CD4-positive, alpha-beta memory T cell (primary cell): ENCODE measurements at regions of chr17 and their contacts with region 1.

Region 1: GRCh38 chr17:29777663-29778062 is 152.4 kb downstream of the SSH2 start:
- DNase-seq: no peak
- H3K4me3 ChIP-seq: no peak overlapping the region
- H3K4me3 Mint-ChIP-seq: no peak overlapping the region
- H3K27ac ChIP-seq: no peak overlapping the region
- H3K27ac Mint-ChIP-seq: no peak overlapping the region
- H3K4me1 ChIP-seq: peaks cover 8% of the 10 kb centered on the region
- H3K4me1 Mint-ChIP-seq: peaks cover 5 to 9% (median 7%) of the 10 kb centered on the region in 4 donors
- H3K27me3 ChIP-seq: no peaks in the 10 kb centered on the region
- H3K27me3 Mint-ChIP-seq: no peaks in the 10 kb centered on the region

Region 2: GRCh38 chr17:29579866-29580771 is 197.5 kb before region 1 on chr17:
- CTCF ChIA-PET with region 1: interaction called, 28 read pairs
- POLR2A ChIA-PET with region 1: interaction called, 3 read pairs
- intact Hi-C with region 1: loop called (anchors 1 kb)
- DNase-seq: peak; percentile 85 to 91 (median 87)
- H3K4me3 ChIP-seq: no peak overlapping the region
- H3K4me3 Mint-ChIP-seq: peak overlapping the region in 2 of 8 donors; percentile 8 to 65
- H3K27ac ChIP-seq: no peak overlapping the region
- H3K27ac Mint-ChIP-seq: peak overlapping the region; percentile 55 to 90 (median 83)
- H3K4me1 ChIP-seq: peaks cover 18% of the 10 kb centered on the region
- H3K4me1 Mint-ChIP-seq: peaks cover 8 to 31% (median 18%) of the 10 kb centered on the region in 4 donors
- H3K27me3 ChIP-seq: no peaks in the 10 kb centered on the region
- H3K27me3 Mint-ChIP-seq: no peaks in the 10 kb centered on the region

Region 3: DNA sequence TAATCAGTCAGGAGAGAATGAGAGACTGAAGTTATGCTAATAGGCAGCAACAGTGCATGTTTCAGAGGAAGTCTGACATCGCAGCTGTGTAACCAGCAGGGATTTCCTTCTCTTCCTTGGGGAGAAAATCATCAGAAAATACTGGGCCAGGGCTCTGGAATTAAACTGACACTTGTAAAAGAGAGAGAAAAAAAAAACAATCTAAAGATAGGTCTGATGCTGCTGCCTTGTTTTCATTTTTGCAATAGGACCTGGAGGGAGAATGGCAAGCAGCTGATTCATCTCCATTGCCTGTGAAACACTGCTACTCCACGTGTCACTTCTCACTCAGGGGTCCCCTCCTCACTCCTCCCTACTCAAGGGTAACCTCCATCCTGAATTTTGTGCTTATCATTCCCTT is 137.2 kb before region 1 on chr17:
- CTCF ChIA-PET with region 1: interaction called, 141 read pairs
- POLR2A ChIA-PET with region 1: interaction called, 9 read pairs
- intact Hi-C with region 1: loop called (anchors 1 kb)
- DNase-seq: no peak
- H3K4me3 ChIP-seq: no peak overlapping the region
- H3K4me3 Mint-ChIP-seq: no peak overlapping the region
- H3K27ac ChIP-seq: no peak overlapping the region
- H3K27ac Mint-ChIP-seq: peak overlapping the region in 5 of 7 donors; percentile 60 to 96 (median 75)
- H3K4me1 ChIP-seq: no peaks in the 10 kb centered on the region
- H3K4me1 Mint-ChIP-seq: peaks cover 7 to 19% (median 13%) of the 10 kb centered on the region in 4 donors
- H3K27me3 ChIP-seq: no peaks in the 10 kb centered on the region
- H3K27me3 Mint-ChIP-seq: no peaks in the 10 kb centered on the region

Region 4: DNA sequence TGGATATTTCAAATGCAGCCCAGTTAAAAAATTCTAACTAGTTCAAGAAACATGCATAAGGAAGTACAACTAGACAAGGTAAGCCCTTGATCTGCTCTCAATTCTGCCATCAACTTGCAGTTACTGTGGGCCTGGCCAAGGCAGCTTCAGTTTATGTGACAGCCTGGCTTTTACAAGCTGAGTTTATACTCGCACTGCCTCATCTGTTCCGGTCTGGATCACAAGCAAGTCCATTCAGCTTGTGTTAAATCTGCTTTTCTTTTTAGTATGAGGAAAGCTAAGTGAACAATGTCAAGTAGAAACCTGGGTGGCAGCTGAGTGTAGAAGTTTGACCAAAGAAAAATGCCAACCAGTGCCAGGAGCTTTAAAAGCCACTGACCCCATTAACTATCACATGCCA is 78.4 kb before region 1 on chr17:
- CTCF ChIA-PET with region 1: interaction called, 28 read pairs
- POLR2A ChIA-PET with region 1: interaction called, 6 read pairs
- intact Hi-C with region 1: no loop called
- DNase-seq: no peak
- H3K4me3 ChIP-seq: no peak overlapping the region
- H3K4me3 Mint-ChIP-seq: no peak overlapping the region
- H3K27ac ChIP-seq: no peak overlapping the region
- H3K27ac Mint-ChIP-seq: peak overlapping the region in 5 of 7 donors; percentile 47 to 80 (median 69)
- H3K4me1 ChIP-seq: peaks cover 7% of the 10 kb centered on the region
- H3K4me1 Mint-ChIP-seq: peaks cover 9 to 19% (median 14%) of the 10 kb centered on the region in 4 donors
- H3K27me3 ChIP-seq: no peaks in the 10 kb centered on the region
- H3K27me3 Mint-ChIP-seq: no peaks in the 10 kb centered on the region

Region 5: GRCh38 chr17:29766796-29767327 is 10.8 kb before region 1 on chr17:
- CTCF ChIA-PET with region 1: interaction called, 22 read pairs
- POLR2A ChIA-PET with region 1: interaction called, 14 read pairs
- intact Hi-C with region 1: no loop called
- DNase-seq: no peak
- H3K4me3 ChIP-seq: no peak overlapping the region
- H3K4me3 Mint-ChIP-seq: no peak overlapping the region
- H3K27ac ChIP-seq: no peak overlapping the region
- H3K27ac Mint-ChIP-seq: peak overlapping the region in 3 of 7 donors; percentile 35 to 60 (median 48)
- H3K4me1 ChIP-seq: peaks cover 5% of the 10 kb centered on the region
- H3K4me1 Mint-ChIP-seq: peaks cover 0 to 9% (median 5%) of the 10 kb centered on the region in 4 donors
- H3K27me3 ChIP-seq: no peaks in the 10 kb centered on the region
- H3K27me3 Mint-ChIP-seq: no peaks in the 10 kb centered on the region